Naive thymus-derived CD4-positive, alpha-beta T cell (primary cell): ENCODE measurements at regions of chr1 and their contacts with region 1.

Region 1: DNA sequence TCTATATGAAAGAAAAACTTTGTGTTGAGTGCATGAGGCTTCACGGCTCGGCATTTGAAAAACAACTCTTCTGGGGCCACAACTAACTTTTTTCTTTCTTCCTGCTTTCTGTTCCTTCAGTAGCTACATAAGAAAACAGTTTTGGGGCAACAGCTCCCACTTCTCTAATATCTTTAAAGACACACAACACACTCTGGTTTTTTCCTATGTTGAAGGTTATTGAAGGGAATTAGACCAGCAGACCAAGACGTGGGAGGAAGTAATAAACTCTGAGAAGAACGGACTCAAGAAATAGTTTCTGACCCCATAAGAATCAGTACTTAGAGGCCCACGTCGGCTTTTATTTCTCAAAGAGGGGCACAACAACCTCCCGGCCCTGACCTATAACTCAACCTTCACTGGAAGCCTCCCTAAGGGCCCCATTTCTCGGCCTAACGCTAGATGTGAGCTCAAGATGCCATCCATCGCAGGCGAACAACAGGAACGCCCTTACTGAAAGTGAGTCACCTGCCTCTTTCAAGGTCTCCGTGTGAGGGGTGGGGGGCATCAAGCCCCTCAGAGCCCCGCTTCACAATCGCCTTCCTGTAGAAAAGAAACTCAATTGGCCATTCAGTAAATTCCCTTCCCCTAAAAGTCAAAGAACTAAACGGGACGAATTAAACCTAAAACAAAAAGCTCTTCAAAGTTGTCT is 844 bp downstream of the ZMYM6 start:
- DNase-seq: peak in 5 of 9 donors; percentile 4 to 42 (median 7)
- ATAC-seq: peak; percentile 36
- H3K4me3 ChIP-seq: peak overlapping the region; percentile 100
- H3K4me3 Mint-ChIP-seq: peak overlapping the region; percentile 87 to 100 (median 98)
- H3K27ac ChIP-seq: peak overlapping the region; percentile 82
- H3K27ac Mint-ChIP-seq: peak overlapping the region; percentile 92 to 99 (median 97)
- H3K4me1 ChIP-seq: peaks cover 15 to 17% of the 10 kb centered on the region in 2 donors
- H3K4me1 Mint-ChIP-seq: peaks cover 24 to 53% (median 43%) of the 10 kb centered on the region in 7 donors
- H3K27me3 ChIP-seq: no peaks in the 10 kb centered on the region
- H3K27me3 Mint-ChIP-seq: peaks cover 0 to 2% (median 0%) of the 10 kb centered on the region in 5 donors

Region 2: DNA sequence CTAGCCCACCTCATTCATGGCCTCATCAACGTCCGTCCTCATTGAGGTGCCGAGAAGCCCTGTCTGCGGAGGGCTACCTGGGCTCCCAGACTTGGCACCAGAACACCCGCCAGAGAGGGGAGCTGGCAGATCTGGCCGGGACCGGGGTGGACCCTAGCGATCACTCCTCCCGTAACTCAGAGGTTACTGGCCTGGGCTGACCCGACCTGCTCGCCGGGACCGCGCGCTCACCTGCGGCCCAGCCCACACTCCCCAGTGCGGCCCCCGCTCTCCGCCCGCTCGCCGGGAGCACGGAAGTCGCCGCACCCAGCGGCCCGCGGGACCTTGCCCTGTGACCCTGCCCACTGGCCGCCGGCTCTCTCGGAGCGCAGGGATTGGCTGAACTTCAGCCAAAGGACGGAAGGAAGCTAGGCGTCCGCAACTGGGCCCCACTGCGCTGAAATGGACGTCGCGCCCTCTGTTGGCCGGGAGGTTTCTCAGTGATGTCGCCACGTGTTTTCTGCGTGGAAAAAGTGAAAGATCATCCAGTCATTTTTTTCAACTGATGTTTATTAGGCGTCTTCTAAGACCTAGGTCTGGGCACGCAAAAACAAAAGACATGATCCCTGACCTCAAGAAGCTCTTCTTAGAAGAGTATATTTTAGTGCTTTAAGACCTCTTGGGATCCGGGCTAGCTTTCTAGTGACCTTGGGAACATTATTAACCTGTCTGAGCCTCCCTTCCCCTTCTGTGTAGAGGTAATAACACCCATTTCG is 171.3 kb before region 1 on chr1 and contains the start of gene SMIM12:
- CTCF ChIA-PET with region 1: interaction called, 4 read pairs
- POLR2A ChIA-PET with region 1: interaction called, 3 read pairs
- intact Hi-C with region 1: loop called (anchors 5 kb)
- DNase-seq: peak; percentile 69 to 92 (median 75)
- ATAC-seq: peak; percentile 99
- H3K4me3 ChIP-seq: peak within 1 kb of the TSS; percentile 72
- H3K4me3 Mint-ChIP-seq: peak within 1 kb of the TSS; percentile 85 to 100 (median 95)
- H3K27ac ChIP-seq: peak within 1 kb of the TSS; percentile 93
- H3K27ac Mint-ChIP-seq: peak within 1 kb of the TSS; percentile 90 to 99 (median 96)
- H3K4me1 ChIP-seq: peaks cover 38 to 43% of the 10 kb centered on the region in 2 donors
- H3K4me1 Mint-ChIP-seq: peaks cover 39 to 66% (median 63%) of the 10 kb centered on the region in 7 donors
- H3K27me3 ChIP-seq: no peaks in the 10 kb centered on the region
- H3K27me3 Mint-ChIP-seq: no peaks in the 10 kb centered on the region
- total RNA-seq, gene SMIM12: 29.1 to 46.4 (median 38.2) TPM

Region 3: GRCh38 chr1:34984793-34985608 is 45.9 kb before region 1 on chr1 and contains the start of gene TMEM35B:
- CTCF ChIA-PET with region 1: interaction called, 3 read pairs
- POLR2A ChIA-PET with region 1: interaction called, 22 read pairs
- intact Hi-C with region 1: loop called (anchors 1 kb)
- DNase-seq: peak; percentile 69 to 83 (median 79)
- ATAC-seq: peak; percentile 97
- H3K4me3 ChIP-seq: peak within 1 kb of the TSS; percentile 96
- H3K4me3 Mint-ChIP-seq: peak within 1 kb of the TSS; percentile 95 to 100 (median 98)
- H3K27ac ChIP-seq: peak within 1 kb of the TSS; percentile 94
- H3K27ac Mint-ChIP-seq: peak within 1 kb of the TSS; percentile 92 to 99 (median 97)
- H3K4me1 ChIP-seq: peaks cover 16 to 18% of the 10 kb centered on the region in 2 donors
- H3K4me1 Mint-ChIP-seq: peaks cover 12 to 49% (median 40%) of the 10 kb centered on the region in 7 donors
- H3K27me3 ChIP-seq: no peaks in the 10 kb centered on the region
- H3K27me3 Mint-ChIP-seq: no peaks in the 10 kb centered on the region
- total RNA-seq, gene TMEM35B: 5.4 to 37.7 (median 32.8) TPM

Region 4: DNA sequence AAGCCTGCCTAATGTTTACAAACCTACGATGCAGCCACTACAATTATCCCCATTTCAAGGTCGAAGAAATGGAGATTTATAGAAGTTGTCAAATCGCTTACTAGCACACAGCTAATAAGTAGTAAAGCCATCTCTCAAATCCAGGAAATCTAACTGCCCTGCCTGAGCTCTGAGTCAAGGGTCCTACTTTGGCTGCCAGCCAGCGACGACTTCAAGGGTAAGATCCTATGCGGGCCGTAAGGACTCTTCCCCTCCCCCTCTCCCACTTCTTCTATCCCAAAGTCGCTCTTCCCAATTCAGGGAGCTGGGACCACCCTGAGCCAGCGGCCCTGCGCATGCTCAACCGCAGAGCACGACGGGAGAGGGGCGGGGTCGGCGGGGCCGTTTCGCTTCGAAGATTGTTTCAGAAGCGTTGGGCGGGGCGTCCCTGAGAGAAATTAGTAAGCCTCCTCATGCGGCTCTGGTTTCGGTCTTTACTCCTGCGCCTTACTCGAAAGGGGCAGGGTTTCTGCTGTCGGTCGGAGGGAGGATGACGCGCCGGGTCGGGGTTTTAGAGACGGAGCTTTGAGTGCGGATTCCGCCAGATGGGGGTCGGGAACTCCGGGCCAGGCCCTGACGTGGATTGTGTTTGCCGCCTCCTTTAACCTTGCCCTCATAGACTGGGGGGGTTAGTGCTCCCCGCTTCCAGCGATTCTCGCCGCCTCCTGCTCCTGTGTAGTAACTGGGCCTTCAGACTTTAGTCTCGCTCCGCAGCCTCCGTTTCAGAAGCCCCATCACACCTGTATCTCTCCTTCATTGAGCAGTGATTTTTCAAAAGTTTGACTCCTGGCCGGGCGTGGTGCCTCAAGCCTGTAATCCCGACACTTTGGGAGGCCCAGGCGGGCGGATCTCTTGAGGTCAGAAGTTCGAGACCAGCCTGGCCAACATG is 48.4 kb after region 1 on chr1 and contains the start of gene ZMYM1:
- CTCF ChIA-PET with region 1: interaction called, 7 read pairs
- POLR2A ChIA-PET with region 1: interaction called, 4 read pairs
- intact Hi-C with region 1: loop called (anchors 1 kb)
- DNase-seq: peak; percentile 64 to 87 (median 75)
- ATAC-seq: peak; percentile 92
- H3K4me3 ChIP-seq: peak within 1 kb of the TSS; percentile 72
- H3K4me3 Mint-ChIP-seq: peak within 1 kb of the TSS; percentile 84 to 100 (median 98)
- H3K27ac ChIP-seq: peak within 1 kb of the TSS; percentile 86
- H3K27ac Mint-ChIP-seq: peak within 1 kb of the TSS; percentile 97 to 100 (median 99)
- H3K4me1 ChIP-seq: peaks cover 8 to 11% of the 10 kb centered on the region in 2 donors
- H3K4me1 Mint-ChIP-seq: peaks cover 24 to 47% (median 42%) of the 10 kb centered on the region in 7 donors
- H3K27me3 ChIP-seq: no peaks in the 10 kb centered on the region
- H3K27me3 Mint-ChIP-seq: peaks cover 0 to 17% (median 10%) of the 10 kb centered on the region in 5 donors
- total RNA-seq, gene ZMYM1: 11.8 to 21.2 (median 13.9) TPM

Region 5: GRCh38 chr1:35298464-35298863 is 267.6 kb after region 1 on chr1:
- CTCF ChIA-PET with region 1: no interaction called
- POLR2A ChIA-PET with region 1: no interaction called
- intact Hi-C with region 1: loop called in 1 of 2 experiments (anchors 10 kb)
- DNase-seq: peak in 7 of 9 donors; percentile 43 to 68 (median 60)
- ATAC-seq: peak; percentile 92
- H3K4me3 ChIP-seq: no peak overlapping the region
- H3K4me3 Mint-ChIP-seq: no peak overlapping the region
- H3K27ac ChIP-seq: no peak overlapping the region
- H3K27ac Mint-ChIP-seq: peak overlapping the region in 5 of 9 donors; percentile 26 to 72 (median 62)
- H3K4me1 ChIP-seq: no peaks in the 10 kb centered on the region
- H3K4me1 Mint-ChIP-seq: peaks cover 6 to 26% (median 14%) of the 10 kb centered on the region in 7 donors
- H3K27me3 ChIP-seq: no peaks in the 10 kb centered on the region
- H3K27me3 Mint-ChIP-seq: no peaks in the 10 kb centered on the region

Region 6: GRCh38 chr1:36160949-36161485 is 1130.1 kb after region 1 on chr1:
- CTCF ChIA-PET with region 1: no interaction called
- POLR2A ChIA-PET with region 1: no interaction called
- intact Hi-C with region 1: loop called in 1 of 2 experiments (anchors 5 kb)
- DNase-seq: peak; percentile 27 to 72 (median 66)
- ATAC-seq: peak; percentile 44
- H3K4me3 ChIP-seq: peak overlapping the region; percentile 59
- H3K4me3 Mint-ChIP-seq: peak overlapping the region; percentile 79 to 92 (median 87)
- H3K27ac ChIP-seq: peak overlapping the region; percentile 94
- H3K27ac Mint-ChIP-seq: peak overlapping the region; percentile 92 to 99 (median 97)
- H3K4me1 ChIP-seq: peaks cover 56 to 66% of the 10 kb centered on the region in 2 donors
- H3K4me1 Mint-ChIP-seq: peaks cover 52 to 79% (median 70%) of the 10 kb centered on the region in 7 donors
- H3K27me3 ChIP-seq: no peaks in the 10 kb centered on the region
- H3K27me3 Mint-ChIP-seq: no peaks in the 10 kb centered on the region